WTC11 (cell line): ENCODE measurements at regions of chr16 and their contacts with region 1.

Region 1: DNA sequence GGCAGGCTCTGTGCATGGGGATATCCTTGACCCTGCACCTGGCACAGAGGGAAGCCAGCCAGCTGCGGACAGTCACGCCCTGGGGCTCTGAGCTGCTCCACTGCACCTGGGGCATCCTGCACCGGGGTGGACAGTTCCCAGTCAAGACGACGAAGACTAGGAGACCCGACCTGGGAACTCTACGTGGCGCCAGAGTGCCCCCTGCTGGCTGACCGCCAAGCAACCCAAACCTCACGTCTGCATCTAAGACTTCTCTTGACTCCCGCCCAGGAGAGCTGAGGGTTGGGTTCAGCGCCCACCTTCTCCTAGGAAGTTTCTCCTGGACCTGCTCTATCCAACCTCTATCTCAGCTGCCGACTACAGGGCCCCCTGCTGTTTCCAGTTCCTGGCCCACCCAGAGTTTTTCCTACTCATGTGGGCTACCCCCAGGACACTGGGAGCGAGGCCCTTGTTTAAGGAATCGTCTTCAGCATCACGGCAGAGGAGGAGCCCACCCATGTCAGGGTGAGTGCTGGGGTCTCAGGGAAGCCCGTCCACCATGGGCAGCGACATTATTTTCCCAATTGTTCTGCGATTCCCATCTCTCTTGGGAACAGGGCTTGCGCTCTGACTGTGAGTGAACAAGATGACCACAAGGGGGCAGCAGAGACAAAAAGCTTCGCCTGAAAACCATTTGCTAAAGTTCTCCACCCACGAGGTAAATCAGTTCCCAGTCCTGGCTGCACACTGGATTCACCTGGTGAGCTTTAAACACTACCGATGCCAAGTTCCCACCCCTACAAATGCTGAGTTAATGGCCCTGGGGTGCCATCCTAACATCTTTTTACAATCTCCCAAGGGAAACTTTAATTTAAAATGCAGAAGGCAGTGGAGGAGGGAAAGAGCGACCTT is 29.3 kb downstream of the TLE7 start:
- DNase-seq: peak; percentile 87
- ATAC-seq: peak; percentile 90
- H3K4me3 Mint-ChIP-seq: peak overlapping the region; percentile 70
- H3K27ac Mint-ChIP-seq: no peak overlapping the region
- H3K4me1 Mint-ChIP-seq: peaks cover 8% of the 10 kb centered on the region
- H3K27me3 Mint-ChIP-seq: peaks cover 7% of the 10 kb centered on the region
- CTCF ChIP-seq: peak; percentile 87

Region 2: GRCh38 chr16:71303938-71304337 is 108.6 kb before region 1 on chr16:
- CTCF ChIA-PET with region 1: no interaction called
- POLR2A ChIA-PET with region 1: no interaction called
- DNase-seq: no peak
- ATAC-seq: no peak
- H3K4me3 Mint-ChIP-seq: no peak overlapping the region
- H3K27ac Mint-ChIP-seq: no peak overlapping the region
- H3K4me1 Mint-ChIP-seq: no peaks in the 10 kb centered on the region
- H3K27me3 Mint-ChIP-seq: peaks cover 19% of the 10 kb centered on the region
- CTCF ChIP-seq: no peak

Region 3: GRCh38 chr16:71358464-71358998 is 54.0 kb before region 1 on chr16 and contains the start of gene CALB2:
- CTCF ChIA-PET with region 1: interaction called, 27 read pairs
- POLR2A ChIA-PET with region 1: no interaction called
- DNase-seq: peak; percentile 81
- ATAC-seq: peak; percentile 95
- H3K4me3 Mint-ChIP-seq: peak within 1 kb of the TSS; percentile 69
- H3K27ac Mint-ChIP-seq: no peak within 1 kb of the TSS
- H3K4me1 Mint-ChIP-seq: peaks cover 11% of the 10 kb centered on the region
- H3K27me3 Mint-ChIP-seq: peaks cover 34% of the 10 kb centered on the region
- CTCF ChIP-seq: peak; percentile 93
- total RNA-seq, gene CALB2: 1.6 to 2.6 TPM (median 2.5 TPM) in 3 replicates

Region 4: GRCh38 chr16:71373073-71373472 is 39.4 kb before region 1 on chr16:
- CTCF ChIA-PET with region 1: interaction called, 29 read pairs
- POLR2A ChIA-PET with region 1: interaction called, 8 read pairs
- DNase-seq: no peak
- ATAC-seq: no peak
- H3K4me3 Mint-ChIP-seq: no peak overlapping the region
- H3K27ac Mint-ChIP-seq: no peak overlapping the region
- H3K4me1 Mint-ChIP-seq: no peaks in the 10 kb centered on the region
- H3K27me3 Mint-ChIP-seq: peaks cover 4% of the 10 kb centered on the region; the same call in 1 of the 2 replicates
- CTCF ChIP-seq: no peak

Region 5: GRCh38 chr16:71402007-71402406 is 10.5 kb before region 1 on chr16:
- CTCF ChIA-PET with region 1: interaction called, 27 read pairs
- POLR2A ChIA-PET with region 1: no interaction called
- DNase-seq: no peak
- ATAC-seq: peak; percentile 73
- H3K4me3 Mint-ChIP-seq: no peak overlapping the region
- H3K27ac Mint-ChIP-seq: no peak overlapping the region; the same call in 1 of the 2 replicates
- H3K4me1 Mint-ChIP-seq: peaks cover 31% of the 10 kb centered on the region
- H3K27me3 Mint-ChIP-seq: peaks cover 7% of the 10 kb centered on the region
- CTCF ChIP-seq: no peak

Region 6: GRCh38 chr16:71431941-71432340 is 19.4 kb after region 1 on chr16:
- CTCF ChIA-PET with region 1: interaction called, 76 read pairs
- POLR2A ChIA-PET with region 1: no interaction called
- DNase-seq: no peak
- ATAC-seq: no peak
- H3K4me3 Mint-ChIP-seq: no peak overlapping the region
- H3K27ac Mint-ChIP-seq: no peak overlapping the region
- H3K4me1 Mint-ChIP-seq: peaks cover 4% of the 10 kb centered on the region
- H3K27me3 Mint-ChIP-seq: peaks cover 15% of the 10 kb centered on the region
- CTCF ChIP-seq: no peak

Region 7: DNA sequence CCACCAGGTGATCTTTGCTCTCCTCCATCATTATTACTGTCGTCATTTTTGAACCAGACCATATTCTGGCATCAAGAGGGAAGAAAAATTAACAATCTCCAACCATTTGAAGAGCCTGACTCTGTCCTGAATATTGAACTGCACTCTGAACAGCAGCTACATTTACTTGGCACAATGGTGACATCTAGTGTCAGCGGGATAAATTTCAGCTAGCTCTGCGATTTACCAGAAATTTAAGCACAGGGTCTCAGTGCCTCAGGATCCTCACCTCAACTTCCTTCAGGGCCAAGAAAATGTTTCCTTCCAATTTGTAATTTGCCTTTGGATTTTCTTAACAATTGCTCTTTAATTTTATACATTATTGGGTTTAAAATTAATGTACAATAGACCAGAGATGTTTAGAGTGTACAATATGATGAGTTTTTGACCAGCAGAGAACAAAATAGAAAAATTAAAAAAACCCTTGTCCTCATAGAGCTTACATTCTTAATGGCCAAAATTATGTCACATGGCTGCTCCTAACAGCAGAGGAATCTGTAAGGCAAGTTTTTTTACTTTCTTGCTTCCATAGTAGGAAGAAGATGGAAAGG is 87.4 kb after region 1 on chr16:
- CTCF ChIA-PET with region 1: interaction called, 36 read pairs
- POLR2A ChIA-PET with region 1: no interaction called
- DNase-seq: peak; percentile 44
- ATAC-seq: peak; percentile 91
- H3K4me3 Mint-ChIP-seq: no peak overlapping the region
- H3K27ac Mint-ChIP-seq: no peak overlapping the region
- H3K4me1 Mint-ChIP-seq: no peaks in the 10 kb centered on the region
- H3K27me3 Mint-ChIP-seq: no peaks in the 10 kb centered on the region; the same call in none of the 2 replicates
- CTCF ChIP-seq: peak; percentile 34